Dorsolateral prefrontal cortex (tissue), 120 donors: ENCODE measurements at regions of chr4 and their contacts with region 1.

Region 1: DNA sequence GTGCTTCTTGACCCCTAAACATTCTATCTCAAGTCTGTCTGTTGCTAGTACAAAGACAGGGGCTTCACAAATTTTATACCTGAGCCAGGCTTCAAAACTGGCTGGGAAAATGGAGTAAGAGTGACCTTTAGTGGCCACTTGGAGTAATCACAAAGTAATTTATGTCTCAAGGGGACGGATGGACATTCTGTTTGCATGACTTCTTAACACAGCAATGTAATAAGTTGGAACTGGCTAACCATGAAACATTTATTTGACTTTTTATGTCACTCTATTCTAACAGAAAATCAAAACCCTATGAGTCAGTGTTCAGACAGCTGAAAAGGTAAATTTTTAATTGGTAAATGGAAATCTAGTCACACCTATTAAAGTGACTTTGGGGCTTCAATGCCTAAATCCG is 600.6 kb downstream of the ANKRD50 start:
- DNase-seq: no peak
- H3K4me3 ChIP-seq: no peak overlapping the region
- H3K27ac ChIP-seq: no peak overlapping the region
- H3K27me3 ChIP-seq: peaks cover 0 to 6% (median 0%) of the 10 kb centered on the region in 45 donors
- CTCF ChIP-seq: peak in 55 of 56 donors; percentile 38 to 76 (median 52)

Region 2: GRCh38 chr4:123127218-123127617 is 984.7 kb before region 1 on chr4:
- intact Hi-C with region 1: loop called in 1 of 2 experiments (anchors 10 kb)
- DNase-seq: no peak
- H3K4me3 ChIP-seq: no peak overlapping the region
- H3K27ac ChIP-seq: no peak overlapping the region
- H3K27me3 ChIP-seq: no peaks in the 10 kb centered on the region
- CTCF ChIP-seq: peak in 53 of 56 donors; percentile 7 to 69 (median 41)

Region 3: DNA sequence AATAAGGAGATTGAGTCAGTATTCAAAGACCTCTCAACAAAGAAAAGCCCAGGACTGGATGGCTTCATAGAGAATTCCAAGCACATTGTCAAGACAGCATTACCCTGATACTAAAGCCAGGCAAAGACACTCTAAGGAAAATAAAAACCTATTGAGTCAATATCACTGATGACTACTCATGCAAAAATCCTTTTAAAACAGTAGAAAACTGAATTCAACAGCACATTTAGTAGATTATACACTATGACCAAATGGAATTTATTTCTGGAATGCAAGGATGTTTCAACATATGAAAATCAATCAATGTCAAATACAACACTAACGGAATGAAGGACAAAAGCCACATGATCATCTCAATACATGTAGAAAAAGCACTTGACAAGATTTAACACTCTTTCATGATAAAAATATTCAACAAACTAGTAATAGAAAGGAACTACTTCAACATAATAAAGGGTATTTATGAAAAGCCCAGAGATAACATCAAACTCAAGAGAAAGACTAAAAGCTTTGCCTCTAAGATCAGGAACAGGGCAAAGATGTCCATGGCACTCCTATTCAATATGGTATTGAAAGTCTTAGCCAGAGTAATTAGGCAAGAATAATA is 32.6 kb before region 1 on chr4:
- intact Hi-C with region 1: no loop called
- DNase-seq: no peak
- H3K4me3 ChIP-seq: no peak overlapping the region
- H3K27ac ChIP-seq: no peak overlapping the region
- H3K27me3 ChIP-seq: no peaks in the 10 kb centered on the region
- CTCF ChIP-seq: no peak

Region 4: DNA sequence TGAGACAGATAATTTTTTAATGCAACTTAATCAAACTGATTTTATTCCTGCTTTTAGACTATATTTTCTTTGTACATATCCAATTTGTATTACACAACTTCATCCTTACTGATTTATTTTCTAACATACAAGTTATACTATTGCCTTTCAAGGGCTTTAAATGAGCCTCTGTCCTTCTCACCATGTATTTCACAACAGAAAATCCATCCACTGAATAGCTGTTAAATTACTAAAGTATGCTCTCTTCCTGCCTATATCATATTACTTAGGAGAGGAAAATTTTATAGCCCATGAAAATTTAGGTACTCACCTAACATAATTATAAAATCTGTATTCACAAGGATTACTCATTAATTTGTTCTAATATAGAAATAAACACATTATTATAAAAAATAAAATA is 72.0 kb after region 1 on chr4:
- intact Hi-C with region 1: no loop called
- DNase-seq: no peak
- H3K4me3 ChIP-seq: no peak overlapping the region
- H3K27ac ChIP-seq: no peak overlapping the region
- H3K27me3 ChIP-seq: peaks cover 0 to 4% (median 0%) of the 10 kb centered on the region in 45 donors
- CTCF ChIP-seq: no peak